ENCODE measurements at regions of chr1 and their contacts with region 1.

Region 1: DNA sequence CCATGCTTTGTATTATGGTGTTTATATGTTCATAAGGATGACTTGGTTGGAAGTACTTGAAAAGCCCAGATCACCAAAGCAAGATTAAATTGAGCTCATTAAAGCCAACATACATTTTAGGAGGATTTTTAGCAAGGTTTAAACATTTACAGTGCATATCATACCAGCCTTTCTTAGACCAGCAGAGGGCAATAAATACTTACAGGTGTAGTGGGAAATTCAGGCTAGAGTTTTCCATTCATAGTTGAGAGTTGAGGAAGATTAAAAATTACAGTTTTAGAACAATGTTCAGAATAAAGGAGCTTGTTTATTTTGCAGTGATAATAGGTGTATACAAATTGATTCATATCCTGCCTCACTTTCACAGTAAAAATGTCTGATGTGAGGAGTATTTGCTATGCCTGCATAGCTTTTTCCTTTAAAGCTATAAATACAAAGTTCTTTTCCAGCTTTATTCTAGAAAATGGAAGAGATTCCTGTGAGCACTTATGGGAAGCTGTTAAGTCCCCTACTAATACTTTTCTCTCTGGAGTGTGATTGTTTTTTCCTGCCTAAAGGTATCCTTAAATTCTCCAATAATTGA is 35.3 kb downstream of the DTL start:
- DNase-seq: no peak
- ATAC-seq: peak; percentile 77 to 97 (median 94)
- H3K4me3 ChIP-seq: no peak overlapping the region
- H3K27ac ChIP-seq: no peak overlapping the region
- H3K4me1 ChIP-seq: no peaks in the 10 kb centered on the region
- H3K27me3 ChIP-seq: no peaks in the 10 kb centered on the region
- CTCF ChIP-seq: peak in 3 of 4 donors; percentile 42 to 60 (median 54)

Region 2: GRCh38 chr1:212291505-212292134 is 220.8 kb after region 1 on chr1:
- intact Hi-C with region 1: loop called in 2 of 3 experiments (anchors 5 kb)
- DNase-seq: no peak
- ATAC-seq: peak; percentile 41 to 86 (median 79)
- H3K4me3 ChIP-seq: no peak overlapping the region
- H3K27ac ChIP-seq: no peak overlapping the region
- H3K4me1 ChIP-seq: peaks cover 11 to 63% (median 62%) of the 10 kb centered on the region in 3 donors
- H3K27me3 ChIP-seq: no peaks in the 10 kb centered on the region
- CTCF ChIP-seq: peak in 2 of 4 donors; percentile 26 to 31

Region 3: DNA sequence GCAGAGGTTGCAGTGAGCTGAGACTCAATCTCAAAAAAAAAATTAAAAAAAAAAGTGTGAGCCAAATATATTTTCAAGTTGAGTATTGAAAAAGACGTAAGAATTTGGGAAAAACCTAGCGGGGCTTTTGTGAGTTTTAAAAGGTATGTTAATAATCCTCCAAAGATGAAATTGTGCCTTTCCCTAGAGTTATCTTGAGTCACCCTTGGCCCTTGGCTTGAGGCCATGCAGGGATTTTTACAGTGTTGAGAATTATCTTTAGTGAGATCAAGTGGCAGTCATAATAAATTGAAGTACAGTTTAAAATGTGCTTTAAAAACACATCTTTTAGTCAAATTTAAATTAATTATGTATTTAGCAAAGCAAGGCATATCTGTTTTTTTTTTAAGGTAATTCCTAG is 247.1 kb after region 1 on chr1:
- intact Hi-C with region 1: no loop called
- DNase-seq: no peak
- ATAC-seq: no peak
- H3K4me3 ChIP-seq: no peak overlapping the region
- H3K27ac ChIP-seq: no peak overlapping the region
- H3K4me1 ChIP-seq: peaks cover 3 to 15% (median 10%) of the 10 kb centered on the region in 3 donors
- H3K27me3 ChIP-seq: no peaks in the 10 kb centered on the region
- CTCF ChIP-seq: no peak

Region 4: DNA sequence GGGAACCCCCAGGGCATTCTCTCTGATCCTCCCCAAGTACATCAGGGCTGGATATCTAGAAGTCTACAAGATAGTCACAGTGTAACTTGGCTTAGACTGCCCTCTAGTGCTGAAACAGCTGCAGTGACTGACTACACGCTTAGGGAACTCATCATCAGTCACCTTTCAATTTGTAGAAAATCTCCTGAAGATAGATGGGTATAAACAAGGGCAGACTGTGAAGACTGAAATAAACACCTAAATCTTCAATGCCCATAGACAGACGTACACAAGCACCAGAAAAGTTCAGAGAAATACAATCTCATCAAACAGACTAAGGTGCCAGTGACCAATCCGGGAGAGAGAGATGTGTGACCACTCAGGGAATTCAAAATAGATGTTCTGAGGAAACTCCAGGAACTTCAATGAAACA is 297.3 kb after region 1 on chr1:
- intact Hi-C with region 1: loop called in 2 of 3 experiments (anchors 5 to 10 kb)
- DNase-seq: peak in 3 of 6 donors; percentile 31 to 63 (median 35)
- ATAC-seq: peak; percentile 78 to 98 (median 96)
- H3K4me3 ChIP-seq: no peak overlapping the region
- H3K27ac ChIP-seq: no peak overlapping the region
- H3K4me1 ChIP-seq: no peaks in the 10 kb centered on the region
- H3K27me3 ChIP-seq: no peaks in the 10 kb centered on the region
- CTCF ChIP-seq: peak; percentile 63 to 83 (median 72)

Region 5: DNA sequence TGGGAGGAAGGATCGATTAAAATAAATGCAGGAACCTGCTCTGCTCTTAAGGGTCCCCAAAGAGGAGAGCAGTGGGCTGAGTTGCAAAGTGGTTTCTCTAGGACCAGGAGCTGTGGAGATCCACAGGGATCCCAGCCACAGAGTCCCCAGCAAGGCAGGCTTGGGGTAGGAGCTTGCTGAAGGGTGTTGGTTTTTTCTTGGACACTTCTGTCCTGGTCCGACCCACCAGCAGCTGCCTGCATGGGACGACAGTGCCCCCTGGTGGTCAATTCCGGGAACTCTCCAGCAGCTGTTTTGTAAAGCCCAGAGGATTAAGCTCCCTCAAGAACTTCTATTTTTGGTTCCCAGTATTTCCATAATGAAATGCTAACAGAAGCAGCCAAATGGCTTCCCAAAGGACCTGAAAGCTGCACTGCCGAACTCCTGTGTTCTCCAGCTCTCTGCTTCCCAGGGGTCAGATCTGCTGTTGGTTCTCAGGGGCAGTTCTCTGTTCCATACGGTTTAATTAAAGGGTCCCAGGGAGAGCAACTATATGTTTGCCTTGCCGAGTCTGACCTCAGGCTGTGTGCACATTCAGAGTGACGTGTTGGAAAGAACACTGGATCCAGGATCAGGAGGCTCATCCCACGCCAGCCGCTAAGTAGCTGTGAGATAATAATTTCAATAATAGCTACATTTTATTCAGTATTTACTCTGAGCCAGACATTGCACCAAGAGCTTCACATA is 385.2 kb after region 1 on chr1:
- intact Hi-C with region 1: loop called in 2 of 3 experiments (anchors 5 to 10 kb)
- DNase-seq: peak; percentile 61 to 96 (median 88)
- ATAC-seq: peak; percentile 76 to 95 (median 92)
- H3K4me3 ChIP-seq: no peak overlapping the region
- H3K27ac ChIP-seq: no peak overlapping the region
- H3K4me1 ChIP-seq: no peaks in the 10 kb centered on the region
- H3K27me3 ChIP-seq: no peaks in the 10 kb centered on the region
- CTCF ChIP-seq: peak; percentile 95 to 97 (median 96)